Motor neuron (in vitro differentiated cells): ENCODE measurements at regions of chr20 and their contacts with region 1.

Region 1: GRCh38 chr20:47392015-47392720 is 35.7 kb upstream of the ZMYND8 start:
- ATAC-seq: peak in 6 of 8 experiments; percentile 32 to 97 (median 83)
- H3K4me3 ChIP-seq: no peak overlapping the region
- H3K27ac ChIP-seq: no peak overlapping the region
- H3K4me1 ChIP-seq: no peaks in the 10 kb centered on the region

Region 2: GRCh38 chr20:46757754-46758678 is 634.2 kb before region 1 on chr20:
- in situ Hi-C with region 1: loop called in 5 of 9 experiments (anchors 25 kb)
- ATAC-seq: peak in 7 of 8 experiments; percentile 42 to 79 (median 45)
- H3K4me3 ChIP-seq: no peak overlapping the region
- H3K27ac ChIP-seq: no peak overlapping the region
- H3K4me1 ChIP-seq: peaks cover 0 to 3% of the 10 kb centered on the region in 2 donors

Region 3: DNA sequence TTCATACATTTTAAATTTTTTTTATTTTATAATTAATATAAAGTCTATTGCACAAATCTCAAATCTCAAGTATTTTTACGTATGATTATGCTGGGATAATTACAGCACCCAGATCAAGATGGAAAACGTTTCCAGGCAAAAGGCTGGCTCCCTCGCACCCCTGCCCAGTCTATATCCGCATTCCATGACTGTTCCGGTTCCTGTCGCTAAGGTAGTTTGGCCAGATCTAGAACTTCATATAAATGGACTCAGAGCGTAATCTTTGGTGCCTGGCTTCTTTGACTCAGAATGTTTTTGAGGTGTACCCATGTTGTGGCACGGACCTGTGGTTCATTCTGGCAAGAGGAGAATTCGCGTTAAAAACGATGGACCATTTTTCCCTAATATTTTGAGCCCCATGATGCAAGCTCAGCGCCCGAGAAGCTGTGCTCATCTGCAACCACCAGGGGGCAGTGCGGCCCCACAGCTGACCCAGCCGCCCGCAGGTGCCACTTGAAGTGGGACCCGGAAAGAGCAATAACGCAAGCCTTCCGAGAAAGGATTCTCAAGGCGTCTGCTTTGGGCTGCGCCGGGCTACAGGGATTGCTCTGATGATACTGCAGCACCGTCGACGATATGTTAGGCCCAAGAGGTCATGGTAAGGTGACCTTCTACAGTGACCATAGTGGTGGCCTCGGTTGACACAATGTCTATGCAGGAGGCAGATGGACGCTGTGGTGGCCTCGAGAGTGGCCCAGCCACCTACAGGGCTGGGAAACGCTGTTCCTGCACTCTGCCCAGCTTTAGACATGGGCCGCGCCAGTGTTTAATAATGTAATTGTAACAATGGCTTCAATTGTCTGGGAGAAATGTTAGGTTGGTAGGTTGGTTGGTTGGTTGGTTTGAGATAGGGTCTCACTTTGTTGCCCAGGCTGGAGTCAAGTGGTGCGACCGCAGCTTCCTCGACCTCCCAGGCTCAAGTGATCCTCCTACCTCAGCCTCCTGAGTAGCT is 195.8 kb before region 1 on chr20:
- in situ Hi-C with region 1: loop called in 3 of 9 experiments (anchors 10 to 25 kb)
- ATAC-seq: peak; percentile 56 to 84 (median 75)
- H3K4me3 ChIP-seq: no peak overlapping the region
- H3K27ac ChIP-seq: no peak overlapping the region
- H3K4me1 ChIP-seq: no peaks in the 10 kb centered on the region

Region 4: GRCh38 chr20:47205577-47206498 is 186.3 kb before region 1 on chr20:
- in situ Hi-C with region 1: loop called in 1 of 9 experiments (anchors 10 kb)
- ATAC-seq: peak; percentile 41 to 91 (median 70)
- H3K4me3 ChIP-seq: no peak overlapping the region
- H3K27ac ChIP-seq: no peak overlapping the region
- H3K4me1 ChIP-seq: peaks cover 3 to 5% of the 10 kb centered on the region in 2 donors

Region 5: DNA sequence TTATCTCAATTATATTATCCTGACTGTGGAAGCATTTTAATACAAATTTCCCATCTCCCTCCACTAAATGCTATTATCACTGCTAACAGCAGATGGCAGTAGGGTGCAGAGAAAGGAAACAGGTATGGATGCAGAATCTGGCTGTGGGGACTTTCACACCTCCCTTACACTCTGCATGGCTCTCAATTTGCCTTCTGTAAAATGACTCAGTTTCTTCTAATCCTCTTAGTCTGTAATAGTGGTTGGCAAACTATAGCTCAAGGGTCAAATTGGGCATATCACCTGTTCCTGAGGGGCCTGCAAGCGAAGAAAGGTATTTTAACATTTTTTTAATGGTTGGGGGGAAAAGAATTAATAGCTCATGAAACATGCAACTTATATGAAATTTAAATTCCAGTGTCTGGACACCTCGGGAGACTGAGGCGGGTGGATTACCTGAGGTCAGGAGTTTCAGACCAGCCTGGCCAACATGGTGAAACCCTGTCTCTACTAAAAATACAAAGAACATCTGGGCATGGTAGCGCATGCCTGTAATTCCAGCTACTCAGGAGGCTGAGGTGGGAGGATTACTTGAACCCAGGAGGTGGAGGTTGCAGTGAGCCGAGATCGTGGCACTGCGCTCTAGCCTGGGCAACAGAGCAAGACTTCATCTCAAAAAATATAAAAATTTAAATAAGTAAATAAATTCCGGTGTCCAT is 119.1 kb before region 1 on chr20:
- in situ Hi-C with region 1: loop called in 5 of 9 experiments (anchors 10 to 25 kb)
- ATAC-seq: peak in 6 of 8 experiments; percentile 9 to 74 (median 45)
- H3K4me3 ChIP-seq: no peak overlapping the region
- H3K27ac ChIP-seq: no peak overlapping the region
- H3K4me1 ChIP-seq: peaks cover 4 to 7% of the 10 kb centered on the region in 2 donors

Region 6: DNA sequence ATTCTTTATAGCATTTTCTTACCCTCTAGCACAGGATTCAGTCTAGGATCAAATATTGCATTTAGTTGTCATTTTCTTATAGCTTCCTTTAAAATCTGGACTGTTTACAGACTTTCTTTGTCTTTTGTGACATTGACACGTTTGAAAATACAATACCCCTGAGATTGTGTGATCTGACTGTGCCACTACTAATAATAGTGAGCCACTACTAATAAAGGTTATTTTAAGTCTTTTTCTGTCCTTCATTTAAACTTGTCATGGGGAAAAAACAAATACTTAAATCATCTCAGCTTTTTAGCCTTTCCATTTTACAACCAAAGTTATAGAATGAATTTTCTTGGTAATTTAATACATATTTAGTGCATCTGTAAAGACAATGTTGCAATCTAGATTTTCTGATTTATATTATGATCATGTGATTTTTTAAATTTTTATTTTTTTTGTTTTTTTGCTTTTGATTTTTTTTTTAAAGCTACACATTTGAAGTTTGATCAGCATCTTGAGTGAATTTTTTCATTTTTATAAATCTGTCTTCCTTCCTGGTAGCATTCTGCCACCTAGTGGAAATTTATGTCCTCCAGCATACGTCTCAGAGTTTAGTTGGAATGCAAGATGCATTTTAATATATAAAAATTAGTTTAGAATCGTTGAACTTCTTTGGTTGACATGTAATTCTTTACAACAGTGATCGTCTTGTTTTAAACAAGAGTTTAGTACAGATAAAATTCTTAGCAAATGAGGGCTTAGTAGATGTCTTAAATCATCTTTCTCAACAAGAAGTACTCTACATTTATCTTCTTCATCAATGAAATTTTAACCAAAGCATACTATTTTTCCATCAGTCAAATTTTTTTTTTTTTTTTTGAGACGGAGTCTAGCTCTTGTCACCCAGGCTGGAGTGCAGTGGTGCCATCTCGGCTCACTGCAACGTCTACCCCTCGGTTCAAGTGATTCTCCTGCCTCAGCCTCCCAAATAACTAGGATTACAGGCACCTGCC is 228.9 kb after region 1 on chr20:
- in situ Hi-C with region 1: loop called in 3 of 9 experiments (anchors 10 to 25 kb)
- ATAC-seq: peak in 4 of 8 experiments; percentile 12 to 50 (median 29)
- H3K4me3 ChIP-seq: no peak overlapping the region
- H3K27ac ChIP-seq: no peak overlapping the region
- H3K4me1 ChIP-seq: peaks cover 0 to 3% of the 10 kb centered on the region in 2 donors